Prostate gland (tissue), 2 donors: ENCODE measurements at regions of chr7 and their contacts with region 1.

Region 1: DNA sequence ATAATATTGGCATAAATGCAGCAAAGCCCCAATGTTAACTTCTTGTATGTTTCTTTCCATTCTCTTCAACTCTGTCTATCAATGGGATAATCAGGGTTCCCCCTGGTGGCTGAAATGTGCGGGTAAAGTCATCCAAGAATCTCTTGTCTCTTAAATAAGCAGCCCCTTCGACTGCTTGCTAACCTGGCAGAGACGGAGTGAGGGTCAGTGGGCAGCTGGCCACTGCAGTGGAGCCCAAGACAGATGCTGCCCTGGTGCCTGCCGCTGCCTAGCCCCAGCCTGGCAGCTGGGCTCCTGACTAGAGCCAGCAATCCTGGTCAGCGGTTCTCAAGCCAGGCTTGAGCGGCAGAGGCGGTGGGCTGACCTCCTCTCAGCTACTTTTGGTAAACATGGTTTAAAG is 248.9 kb downstream of the COBL start:
- DNase-seq: peak; percentile 53
- H3K4me3 ChIP-seq: no peak overlapping the region
- H3K27ac ChIP-seq: no peak overlapping the region
- H3K4me1 ChIP-seq: peaks cover 6% of the 10 kb centered on the region
- H3K27me3 ChIP-seq: no peaks in the 10 kb centered on the region
- CTCF ChIP-seq: peak; percentile 25 to 68 (median 65)
- POLR2A ChIP-seq: no peak

Region 2: GRCh38 chr7:50595491-50596102 is 472.2 kb before region 1 on chr7:
- intact Hi-C with region 1: loop called (anchors 10 kb)
- DNase-seq: no peak
- H3K4me3 ChIP-seq: no peak overlapping the region
- H3K27ac ChIP-seq: no peak overlapping the region
- H3K4me1 ChIP-seq: no peaks in the 10 kb centered on the region
- H3K27me3 ChIP-seq: no peaks in the 10 kb centered on the region
- CTCF ChIP-seq: peak in 2 of 4 experiments; percentile 13 to 29
- POLR2A ChIP-seq: no peak

Region 3: DNA sequence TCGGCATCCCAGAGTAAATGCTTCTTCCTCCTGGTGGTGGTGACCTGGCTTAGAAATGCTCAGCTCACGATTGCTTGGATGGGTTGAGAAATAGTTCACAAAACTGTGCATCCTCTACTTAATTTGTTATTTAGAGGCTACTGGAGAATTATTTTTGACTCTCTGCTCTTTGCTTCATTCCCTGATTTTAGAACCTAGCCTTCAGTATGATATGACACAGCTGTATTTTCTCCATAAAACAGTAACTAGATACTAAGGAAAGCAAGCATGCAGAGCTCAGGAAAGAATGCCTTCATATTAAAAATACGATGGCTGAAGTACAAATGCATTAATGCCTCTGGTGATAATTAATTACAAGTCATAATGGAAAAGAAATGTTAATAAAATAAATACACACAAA is 850.8 kb after region 1 on chr7:
- intact Hi-C with region 1: no loop called
- DNase-seq: no peak
- H3K4me3 ChIP-seq: no peak overlapping the region
- H3K27ac ChIP-seq: no peak overlapping the region
- H3K4me1 ChIP-seq: no peaks in the 10 kb centered on the region
- H3K27me3 ChIP-seq: no peaks in the 10 kb centered on the region
- CTCF ChIP-seq: no peak
- POLR2A ChIP-seq: no peak